ENCODE measurements at regions of chr7 and their contacts with region 1.

Region 1: GRCh38 chr7:24907311-24907886 is 72.6 kb downstream of the OSBPL3 start:
- DNase-seq: peak; percentile 65
- ATAC-seq: peak; percentile 77
- H3K4me3 ChIP-seq: peak overlapping the region; percentile 32 to 45
- H3K27ac ChIP-seq: peak overlapping the region; percentile 90
- H3K4me1 ChIP-seq: peaks cover 64 to 91% of the 10 kb centered on the region in 2 experiments
- H3K27me3 ChIP-seq: no peaks in the 10 kb centered on the region
- CTCF ChIP-seq: no peak
- POLR2A ChIP-seq: no peak
- RAD21 ChIP-seq: peak; percentile 25; the same call in 1 of the 2 replicates

Region 2: DNA sequence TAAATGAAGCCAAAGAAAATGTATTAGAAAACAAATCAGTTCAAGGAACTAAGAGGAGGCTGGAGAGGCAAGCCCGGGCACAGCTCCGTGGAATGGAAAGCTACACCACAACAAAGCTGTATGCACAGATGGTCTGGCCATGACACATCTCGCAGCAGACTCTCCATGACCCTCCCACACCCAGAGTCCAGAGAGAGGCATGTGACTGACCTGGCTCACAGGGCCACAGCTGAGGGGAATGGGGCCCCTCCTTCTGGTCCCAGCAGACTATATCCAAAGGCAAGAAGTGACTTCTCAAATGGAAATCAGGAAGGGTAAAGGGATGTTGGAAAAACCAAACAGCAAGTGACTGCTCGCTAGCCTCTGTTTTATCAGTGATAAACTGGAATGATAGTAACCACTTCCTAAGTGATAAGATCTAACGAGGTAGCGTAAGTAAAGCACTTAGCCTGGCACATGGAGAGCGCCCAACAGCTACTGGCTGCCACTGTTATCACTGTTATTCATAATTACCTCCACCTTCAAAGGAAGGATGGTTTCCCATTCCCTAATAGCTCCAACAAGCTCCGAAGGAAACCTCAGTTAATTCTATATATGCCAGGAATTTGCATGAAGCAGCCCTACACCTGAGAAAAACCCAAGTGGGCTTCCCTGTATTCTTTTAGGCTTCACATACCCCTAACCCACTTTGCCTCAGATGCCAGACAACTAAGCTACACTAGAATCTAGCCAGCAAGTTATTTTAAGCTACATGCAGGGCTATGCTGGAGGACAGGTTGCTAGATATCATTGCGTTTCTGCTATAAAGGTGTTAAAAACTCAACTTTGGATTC is 64.2 kb after region 1 on chr7:
- CTCF ChIA-PET with region 1: no interaction called
- POLR2A ChIA-PET with region 1: no interaction called
- RAD21 ChIA-PET with region 1: no interaction called
- intact Hi-C with region 1: loop called (anchors 5 kb)
- DNase-seq: peak; percentile 81
- ATAC-seq: peak; percentile 94
- H3K4me3 ChIP-seq: peak overlapping the region; percentile 21 to 49
- H3K27ac ChIP-seq: peak overlapping the region; percentile 99
- H3K4me1 ChIP-seq: peaks cover 76 to 88% of the 10 kb centered on the region in 2 experiments
- H3K27me3 ChIP-seq: no peaks in the 10 kb centered on the region
- CTCF ChIP-seq: no peak
- POLR2A ChIP-seq: no peak
- RAD21 ChIP-seq: no peak

Measured in HCT116 (cell line).